MCF 10A (cell line): ENCODE measurements at regions of chr1 and their contacts with region 1.

Region 1: GRCh38 chr1:159953536-159954515 is at the start of gene SLAMF9:
- DNase-seq: peak; percentile 23
- H3K4me3 Mint-ChIP-seq: no peak within 1 kb of the TSS
- H3K27ac Mint-ChIP-seq: no peak within 1 kb of the TSS
- H3K4me1 Mint-ChIP-seq: peaks cover 25% of the 10 kb centered on the region
- H3K27me3 Mint-ChIP-seq: no peaks in the 10 kb centered on the region
- CTCF ChIP-seq: no peak
- total RNA-seq, gene SLAMF9: not detected in 2 replicates

Region 2: DNA sequence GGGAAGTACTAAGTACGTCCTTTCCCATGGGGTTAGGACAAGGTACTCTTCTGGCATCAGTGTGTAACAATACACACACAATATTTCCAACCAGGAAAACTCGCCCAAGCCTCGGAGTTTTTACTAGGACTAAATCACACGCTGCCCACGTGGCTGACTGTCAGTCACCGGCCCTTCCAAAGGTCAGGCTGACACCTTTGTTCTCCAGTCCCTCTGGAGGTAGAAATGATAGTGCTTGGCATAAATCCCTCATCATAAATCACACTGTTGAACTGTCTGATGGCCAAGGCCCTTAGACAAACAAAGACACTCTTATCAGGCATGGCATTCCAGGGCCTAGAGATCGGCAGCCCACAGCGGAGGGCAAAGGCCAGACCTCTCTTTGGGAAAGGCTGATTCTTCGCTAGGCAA is 17.1 kb after region 1 on chr1:
- CTCF ChIA-PET with region 1: interaction called, 10 read pairs
- POLR2A ChIA-PET with region 1: interaction called, 3 read pairs
- intact Hi-C with region 1: no loop called
- DNase-seq: no peak
- H3K4me3 Mint-ChIP-seq: no peak overlapping the region
- H3K27ac Mint-ChIP-seq: no peak overlapping the region
- H3K4me1 Mint-ChIP-seq: peaks cover 6% of the 10 kb centered on the region
- H3K27me3 Mint-ChIP-seq: no peaks in the 10 kb centered on the region
- CTCF ChIP-seq: no peak

Region 3: DNA sequence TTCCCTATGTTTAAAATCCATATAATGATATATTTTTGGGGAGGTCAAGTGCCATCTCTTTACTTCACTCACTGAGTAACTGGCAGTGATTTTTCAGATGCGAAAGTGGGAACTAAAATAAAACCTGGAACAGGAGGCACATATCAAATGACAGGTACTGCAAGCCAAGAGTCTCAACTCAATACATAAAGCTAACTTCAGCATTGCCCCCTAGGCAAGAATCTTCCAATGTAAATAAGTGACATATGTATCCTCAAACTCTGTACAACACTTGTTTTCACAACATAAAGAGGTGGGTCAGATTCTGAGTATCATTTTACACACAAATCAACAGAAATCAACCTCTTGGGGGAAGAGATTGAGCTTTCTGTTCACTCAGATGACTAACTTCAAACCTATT is 290.4 kb after region 1 on chr1:
- CTCF ChIA-PET with region 1: no interaction called
- POLR2A ChIA-PET with region 1: no interaction called
- intact Hi-C with region 1: no loop called
- DNase-seq: no peak
- H3K4me3 Mint-ChIP-seq: no peak overlapping the region
- H3K27ac Mint-ChIP-seq: no peak overlapping the region
- H3K4me1 Mint-ChIP-seq: peaks cover 7% of the 10 kb centered on the region
- H3K27me3 Mint-ChIP-seq: no peaks in the 10 kb centered on the region
- CTCF ChIP-seq: no peak